ENCODE measurements at regions of chr17 and their contacts with region 1.

Region 1: DNA sequence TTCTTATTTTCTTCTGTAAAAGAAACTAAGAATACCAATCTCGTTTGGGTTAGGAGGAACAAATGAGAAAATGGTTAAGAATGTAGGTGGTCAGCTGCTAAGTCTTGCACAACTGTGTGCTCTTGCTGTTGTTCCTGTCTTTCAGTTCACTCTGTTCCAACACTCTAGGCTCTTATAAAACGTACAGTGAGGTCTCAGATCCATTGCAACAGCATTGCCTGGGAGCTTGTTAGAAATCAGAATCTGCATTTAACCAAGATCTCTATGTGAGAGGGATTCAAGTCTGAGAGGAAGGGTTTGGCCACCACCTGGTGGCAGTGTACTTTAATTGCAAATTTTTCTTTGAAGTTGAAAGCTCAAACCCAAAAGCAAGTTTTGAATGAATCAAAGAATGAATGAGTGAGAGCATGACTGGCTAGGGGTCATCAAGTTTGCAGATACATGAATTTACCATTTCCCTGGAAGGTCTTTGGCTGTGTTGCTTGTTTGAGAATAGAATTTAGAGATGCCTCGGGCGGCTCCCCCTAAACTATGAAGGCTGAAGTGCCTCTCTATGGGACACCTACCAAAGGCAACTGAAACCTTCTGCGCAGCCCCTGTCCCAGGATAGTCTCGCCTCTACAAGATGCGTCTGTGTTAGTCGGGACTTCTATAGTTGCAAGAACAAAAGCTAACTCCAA is 2.5 kb downstream of the ALOX15B start:
- DNase-seq: peak; percentile 80
- H3K4me3 ChIP-seq: no peak overlapping the region
- H3K27ac ChIP-seq: no peak overlapping the region
- H3K4me1 ChIP-seq: peaks cover 6% of the 10 kb centered on the region
- H3K27me3 ChIP-seq: no peaks in the 10 kb centered on the region
- CTCF ChIP-seq: peak; percentile 69

Region 2: DNA sequence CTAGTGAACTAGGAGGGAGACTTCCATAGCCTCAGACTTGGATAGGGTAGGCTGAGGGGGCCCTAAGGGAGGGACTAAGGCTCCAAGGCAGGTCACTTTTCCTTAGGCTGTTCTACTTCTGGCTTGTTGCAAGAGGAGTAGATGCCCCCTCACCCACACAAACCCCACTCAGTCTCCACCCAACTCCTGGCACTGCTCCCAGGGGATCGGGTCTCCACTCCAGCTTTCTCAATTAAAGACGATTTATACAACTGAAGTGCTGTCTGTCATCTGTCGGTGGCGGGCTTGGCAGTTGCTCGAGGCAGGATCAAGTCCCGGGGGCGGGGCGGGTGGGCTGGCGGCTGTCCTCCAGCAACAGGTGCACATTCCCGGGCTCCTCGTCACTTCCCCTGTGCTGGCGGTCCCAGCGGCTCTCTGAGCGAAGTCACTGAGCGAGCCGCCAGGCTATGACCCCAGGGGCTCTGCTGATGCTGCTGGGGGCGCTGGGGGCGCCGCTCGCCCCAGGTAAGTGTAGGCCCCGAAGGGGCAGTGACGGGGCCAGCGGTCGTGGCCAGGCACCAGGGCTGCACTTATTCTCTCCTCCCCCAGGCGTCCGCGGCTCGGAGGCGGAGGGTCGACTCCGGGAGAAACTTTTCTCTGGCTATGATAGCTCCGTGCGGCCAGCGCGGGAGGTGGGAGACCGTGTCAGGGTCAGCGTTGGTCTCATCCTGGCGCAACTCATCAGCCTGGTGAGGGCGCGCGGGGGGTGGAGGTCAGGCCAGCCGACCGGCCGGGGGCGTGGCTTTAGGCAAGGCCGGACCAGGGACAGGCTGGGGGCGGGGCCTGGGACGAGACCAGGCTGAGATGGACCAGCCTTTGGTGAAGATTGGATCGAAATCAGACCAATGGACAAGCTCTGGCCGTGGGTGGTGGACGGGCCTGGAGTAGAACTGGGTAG is 596.4 kb before region 1 on chr17 and contains the start of gene CHRNB1:
- CTCF ChIA-PET with region 1: interaction called, 12 read pairs
- POLR2A ChIA-PET with region 1: no interaction called
- intact Hi-C with region 1: no loop called
- DNase-seq: peak; percentile 68
- H3K4me3 ChIP-seq: peak within 1 kb of the TSS; percentile 45
- H3K27ac ChIP-seq: peak within 1 kb of the TSS; percentile 73
- H3K4me1 ChIP-seq: peaks cover 29% of the 10 kb centered on the region
- H3K27me3 ChIP-seq: no peaks in the 10 kb centered on the region
- CTCF ChIP-seq: no peak
- total RNA-seq, gene CHRNB1: 5.2 and 8.6 TPM in 2 replicates

Region 3: GRCh38 chr17:7740481-7741001 is 300.8 kb before region 1 on chr17:
- CTCF ChIA-PET with region 1: interaction called, 22 read pairs
- POLR2A ChIA-PET with region 1: no interaction called
- intact Hi-C with region 1: loop called (anchors 2 kb)
- DNase-seq: peak; percentile 26
- H3K4me3 ChIP-seq: peak overlapping the region; percentile 9
- H3K27ac ChIP-seq: no peak overlapping the region
- H3K4me1 ChIP-seq: peaks cover 3% of the 10 kb centered on the region
- H3K27me3 ChIP-seq: peaks cover 8% of the 10 kb centered on the region
- CTCF ChIP-seq: no peak

Region 4: DNA sequence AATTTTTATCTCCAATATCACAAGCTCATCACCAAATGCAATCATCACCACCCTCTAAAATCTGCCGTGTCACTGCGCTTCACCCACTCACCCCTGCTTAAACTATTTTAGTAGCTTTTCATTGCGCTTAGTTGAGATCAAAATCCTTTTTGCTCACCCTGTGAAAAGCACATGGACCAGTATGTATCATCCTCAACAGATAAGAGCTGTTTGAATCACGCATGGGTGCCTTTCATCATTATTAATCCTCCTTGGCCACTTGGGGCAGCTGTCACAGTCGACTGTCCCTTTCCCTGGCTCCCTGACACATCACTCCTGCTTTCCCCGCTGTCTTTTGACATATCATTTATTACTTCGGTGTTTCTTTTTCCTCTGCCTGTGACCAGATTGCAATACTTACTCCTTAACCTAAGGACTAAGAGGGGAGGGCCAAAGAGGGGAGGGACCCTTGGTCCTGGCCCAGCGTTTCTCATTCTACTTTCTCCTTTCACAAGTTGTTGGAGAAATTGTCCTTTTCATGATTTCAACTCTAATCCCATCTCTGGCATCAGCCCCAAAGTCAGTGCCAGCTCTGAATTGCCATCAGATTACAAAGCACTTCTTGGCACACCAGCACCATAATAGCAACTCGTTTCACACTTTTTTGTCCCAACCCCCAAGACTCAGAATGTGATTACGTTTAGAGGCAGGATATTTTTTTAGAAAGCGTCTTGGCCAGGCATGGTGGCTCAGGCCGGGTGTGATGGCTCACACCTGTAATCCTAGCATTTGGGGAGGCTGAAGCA is 216.0 kb before region 1 on chr17:
- CTCF ChIA-PET with region 1: interaction called, 6 read pairs
- POLR2A ChIA-PET with region 1: no interaction called
- intact Hi-C with region 1: loop called (anchors 10 kb)
- DNase-seq: peak; percentile 57
- H3K4me3 ChIP-seq: no peak overlapping the region
- H3K27ac ChIP-seq: no peak overlapping the region
- H3K4me1 ChIP-seq: peaks cover 15% of the 10 kb centered on the region
- H3K27me3 ChIP-seq: no peaks in the 10 kb centered on the region
- CTCF ChIP-seq: peak; percentile 42

Region 5: GRCh38 chr17:7862692-7863437 is 178.5 kb before region 1 on chr17:
- CTCF ChIA-PET with region 1: interaction called, 5 read pairs
- POLR2A ChIA-PET with region 1: no interaction called
- intact Hi-C with region 1: loop called (anchors 1 kb)
- DNase-seq: peak; percentile 80
- H3K4me3 ChIP-seq: no peak overlapping the region
- H3K27ac ChIP-seq: no peak overlapping the region
- H3K4me1 ChIP-seq: peaks cover 12% of the 10 kb centered on the region
- H3K27me3 ChIP-seq: no peaks in the 10 kb centered on the region
- CTCF ChIP-seq: peak; percentile 74

Region 6: DNA sequence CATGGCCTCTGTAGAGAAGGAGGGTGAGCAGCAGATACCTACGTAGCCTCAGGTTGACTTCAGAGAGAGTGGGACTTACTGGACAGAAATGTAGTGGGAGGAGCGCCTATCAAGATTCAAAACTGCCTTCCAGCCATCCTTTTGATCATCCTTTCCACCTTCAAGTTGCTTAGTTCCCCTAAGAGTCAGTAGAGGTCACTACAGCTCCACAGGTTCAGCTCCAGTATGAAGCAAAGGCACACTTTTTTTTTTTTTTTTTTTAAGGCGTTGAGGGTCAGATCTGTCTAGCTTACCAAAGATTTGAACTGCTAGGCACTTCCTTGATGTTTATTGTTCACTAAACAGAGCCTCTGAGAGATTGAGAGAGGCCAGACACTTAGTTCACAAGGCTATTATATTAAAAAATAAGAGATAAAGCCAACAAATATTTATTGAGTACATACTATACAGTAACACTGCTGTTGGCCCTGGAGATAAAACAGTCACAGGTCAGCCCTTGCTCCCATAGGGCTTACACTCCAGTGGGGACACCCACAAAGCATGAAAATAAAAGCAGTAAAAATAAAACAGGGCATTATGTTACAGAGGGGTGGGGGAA is 128.4 kb before region 1 on chr17:
- CTCF ChIA-PET with region 1: interaction called, 3 read pairs
- POLR2A ChIA-PET with region 1: no interaction called
- intact Hi-C with region 1: loop called (anchors 1 kb)
- DNase-seq: peak; percentile 75
- H3K4me3 ChIP-seq: no peak overlapping the region
- H3K27ac ChIP-seq: no peak overlapping the region
- H3K4me1 ChIP-seq: peaks cover 15% of the 10 kb centered on the region
- H3K27me3 ChIP-seq: no peaks in the 10 kb centered on the region
- CTCF ChIP-seq: peak; percentile 70

Region 7: DNA sequence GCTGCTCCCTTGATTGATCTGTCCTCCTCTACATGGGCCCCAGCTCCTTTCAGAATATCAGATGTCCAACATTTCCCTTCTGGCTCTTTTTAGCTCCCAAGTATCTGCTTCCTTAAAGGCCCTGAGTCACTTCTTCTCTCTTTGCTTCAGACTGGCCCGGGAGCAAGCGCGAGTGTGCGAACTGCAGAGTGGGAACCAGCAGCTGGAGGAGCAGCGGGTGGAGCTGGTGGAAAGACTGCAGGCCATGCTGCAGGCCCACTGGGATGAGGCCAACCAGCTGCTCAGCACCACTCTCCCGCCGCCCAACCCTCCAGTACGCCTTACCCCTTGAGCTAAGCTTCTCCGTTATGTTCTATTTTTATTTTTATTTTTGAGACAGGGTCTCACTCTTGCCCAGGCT is 97.1 kb before region 1 on chr17:
- CTCF ChIA-PET with region 1: no interaction called
- POLR2A ChIA-PET with region 1: no interaction called
- intact Hi-C with region 1: no loop called
- DNase-seq: no peak
- H3K4me3 ChIP-seq: no peak overlapping the region
- H3K27ac ChIP-seq: no peak overlapping the region
- H3K4me1 ChIP-seq: no peaks in the 10 kb centered on the region
- H3K27me3 ChIP-seq: no peaks in the 10 kb centered on the region
- CTCF ChIP-seq: no peak